ENCODE measurements at regions of chr1 and their contacts with region 1.

Region 1: DNA sequence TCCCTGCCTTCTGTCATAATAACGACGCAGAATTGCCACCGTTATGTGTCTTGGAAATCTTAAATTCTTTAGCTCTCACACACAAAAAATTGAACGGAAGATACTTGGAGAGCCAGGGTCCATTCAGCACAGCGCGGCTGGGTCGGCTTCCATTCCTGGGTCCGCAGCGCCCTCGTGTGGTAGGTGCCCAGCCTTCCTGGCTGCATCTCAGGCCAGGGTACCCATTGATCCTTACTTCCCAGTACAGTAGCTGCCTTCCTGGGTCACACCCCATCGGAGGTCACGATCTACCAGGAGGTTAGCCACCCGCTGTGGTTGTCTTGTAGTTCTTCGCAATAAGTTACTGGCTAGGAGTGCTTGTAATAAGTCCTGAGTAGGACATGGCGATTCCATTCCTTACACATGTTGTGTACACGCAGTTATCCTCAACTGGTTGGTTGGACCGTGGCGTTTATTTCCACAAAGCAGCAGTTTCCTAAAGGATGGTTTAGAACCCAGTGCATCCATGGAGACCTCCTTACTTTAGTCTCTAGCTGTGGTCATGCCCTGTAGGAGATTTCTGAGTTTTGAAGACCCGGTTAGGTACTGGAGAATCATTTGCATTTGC is 9.9 kb upstream of the MTARC1 start:
- DNase-seq: peak; percentile 74 to 92 (median 85)
- H3K4me3 ChIP-seq: no peak overlapping the region
- H3K27ac ChIP-seq: no peak overlapping the region
- H3K4me1 ChIP-seq: no peaks in the 10 kb centered on the region
- H3K27me3 ChIP-seq: no peaks in the 10 kb centered on the region
- CTCF ChIP-seq: peak; percentile 79 to 94 (median 84)
- POLR2A ChIP-seq: no peak

Region 2: GRCh38 chr1:220680085-220680687 is 96.6 kb before region 1 on chr1:
- intact Hi-C with region 1: loop called in 1 of 2 experiments (anchors 5 kb)
- DNase-seq: peak in 5 of 7 donors; percentile 21 to 59 (median 38)
- H3K4me3 ChIP-seq: no peak overlapping the region
- H3K27ac ChIP-seq: no peak overlapping the region
- H3K4me1 ChIP-seq: peaks cover 0 to 5% of the 10 kb centered on the region in 2 donors
- H3K27me3 ChIP-seq: no peaks in the 10 kb centered on the region
- CTCF ChIP-seq: peak; percentile 59 to 84 (median 74)
- POLR2A ChIP-seq: no peak

Region 3: DNA sequence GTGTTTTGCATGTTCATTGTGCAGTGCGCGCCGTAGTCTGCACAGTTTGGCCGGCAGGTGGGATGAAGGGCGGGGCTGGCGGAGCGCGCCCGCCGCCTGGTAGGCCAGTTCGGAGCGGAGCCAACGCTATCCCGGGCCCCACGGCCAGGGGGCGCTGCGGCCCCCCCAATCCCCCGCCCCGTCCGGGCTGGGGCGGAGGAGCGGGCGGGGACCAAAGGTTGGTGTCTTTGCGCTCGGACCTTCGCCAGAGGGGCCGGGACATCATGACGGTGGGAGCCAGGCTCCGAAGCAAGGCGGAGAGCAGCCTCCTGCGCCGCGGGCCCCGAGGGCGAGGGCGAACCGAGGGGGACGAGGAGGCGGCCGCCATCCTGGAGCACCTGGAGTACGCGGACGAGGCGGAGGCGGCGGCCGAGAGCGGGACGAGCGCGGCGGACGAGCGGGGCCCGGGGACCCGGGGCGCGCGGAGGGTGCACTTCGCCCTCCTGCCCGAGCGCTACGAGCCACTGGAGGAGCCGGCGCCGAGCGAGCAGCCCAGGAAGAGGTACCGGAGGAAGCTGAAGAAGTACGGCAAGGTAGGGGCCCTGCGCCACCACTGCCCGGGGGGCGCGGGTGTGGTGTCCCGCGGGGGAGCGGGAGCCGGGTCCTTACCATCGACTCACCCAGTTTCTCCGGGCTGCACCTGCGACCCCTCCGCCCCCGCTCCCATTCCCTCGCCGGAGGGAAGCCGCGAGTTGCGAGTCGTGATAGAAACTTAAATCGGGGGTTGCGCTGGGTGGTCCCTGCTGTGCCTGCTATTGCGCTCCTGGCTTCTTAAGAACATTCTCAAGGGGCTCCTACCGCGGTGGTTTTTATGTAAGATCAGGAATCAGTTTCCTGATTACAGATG is 86.4 kb before region 1 on chr1 and contains the start of gene C1orf115:
- intact Hi-C with region 1: loop called in 1 of 2 experiments (anchors 10 kb)
- DNase-seq: peak; percentile 54 to 83 (median 75)
- H3K4me3 ChIP-seq: peak within 1 kb of the TSS in 2 of 4 donors; percentile 42 to 69
- H3K27ac ChIP-seq: peak within 1 kb of the TSS in 1 of 5 donors; percentile 10
- H3K4me1 ChIP-seq: peaks cover 0 to 16% of the 10 kb centered on the region in 2 donors
- H3K27me3 ChIP-seq: no peaks in the 10 kb centered on the region
- CTCF ChIP-seq: peak; percentile 71 to 97 (median 80)
- POLR2A ChIP-seq: peak in 1 of 2 donors; percentile 17
- total RNA-seq, gene C1orf115: 1.1 to 12.7 (median 6.8) TPM

Measured in adrenal gland (tissue), 19 donors.